Cardiac septum (tissue), 1 donor: ENCODE measurements at regions of chr4 and their contacts with region 1.

Region 1: DNA sequence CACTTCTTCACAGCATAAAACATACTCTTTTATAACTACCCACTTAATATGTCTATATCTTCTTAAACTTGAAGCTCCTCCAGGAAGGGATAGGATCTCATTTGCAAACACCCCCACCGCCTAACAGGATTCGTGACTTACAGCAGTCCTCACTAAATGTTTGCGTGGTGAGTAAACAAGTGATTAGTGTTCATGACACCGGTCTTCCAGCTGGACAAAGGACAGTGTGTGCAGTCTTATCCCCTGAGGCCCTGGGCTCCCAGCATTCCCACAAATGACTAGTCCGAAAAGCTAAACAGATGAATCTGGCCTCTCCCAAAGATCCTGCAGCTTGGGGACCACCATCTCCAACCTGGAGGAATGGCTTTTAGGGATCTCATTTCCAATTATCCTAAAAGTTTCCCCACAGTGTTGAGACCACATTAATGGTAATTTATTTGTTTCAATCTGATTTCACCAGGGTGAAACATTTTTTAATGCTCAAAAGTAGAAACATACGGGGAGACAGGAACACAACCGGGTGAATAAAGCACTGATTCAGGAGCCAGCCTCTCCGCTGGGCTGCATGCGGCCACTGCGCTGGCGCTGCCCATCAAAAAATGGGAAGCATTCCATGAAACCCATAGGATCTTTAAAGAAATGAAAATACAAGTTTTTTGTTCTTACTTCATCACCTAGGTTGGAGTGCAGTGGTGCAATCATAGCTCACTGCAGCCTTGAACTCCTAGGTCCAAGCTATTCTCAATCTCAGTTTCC is 69.2 kb downstream of the HADH start:
- DNase-seq: no peak

Region 2: GRCh38 chr4:108512615-108513505 is 454.0 kb after region 1 on chr4:
- intact Hi-C with region 1: loop called (anchors 5 kb)
- DNase-seq: no peak